ENCODE measurements at regions of chr14 and their contacts with region 1.

Region 1: DNA sequence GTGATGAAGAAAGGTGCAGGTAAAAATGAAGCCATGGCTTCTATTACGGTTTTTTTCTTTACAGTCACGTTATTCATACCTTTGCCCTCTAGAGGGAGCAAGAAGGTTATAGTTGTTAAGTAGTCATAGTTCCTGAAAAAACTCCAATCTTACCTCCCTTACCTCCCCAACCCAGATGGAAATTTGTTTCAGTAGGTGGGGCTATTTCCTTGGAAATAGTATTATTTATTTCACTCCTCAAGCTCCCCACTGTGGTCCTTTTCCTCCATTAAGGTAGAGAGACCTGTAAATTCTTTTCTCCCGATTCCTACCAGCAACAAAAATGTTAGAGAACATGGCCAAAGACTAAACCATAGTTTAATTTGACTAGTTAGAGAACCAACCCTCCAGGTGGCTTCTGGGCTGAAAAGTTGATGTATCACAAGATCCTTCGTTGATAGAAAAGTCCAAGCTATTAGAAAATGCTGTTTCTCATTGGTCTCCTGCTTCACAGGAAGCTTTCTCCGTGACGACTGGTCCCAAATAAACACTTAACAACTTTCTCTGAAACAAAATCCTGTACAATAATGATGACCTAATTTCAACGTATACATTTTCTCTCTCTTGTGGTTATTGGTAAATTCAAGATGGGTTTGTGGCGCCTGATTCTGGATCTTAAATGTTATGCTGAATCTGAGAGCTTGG is 43.5 kb downstream of the TMX1 start:
- H3K4me3 Mint-ChIP-seq: no peak overlapping the region
- H3K27ac Mint-ChIP-seq: no peak overlapping the region
- H3K4me1 Mint-ChIP-seq: no peaks in the 10 kb centered on the region
- H3K27me3 Mint-ChIP-seq: no peaks in the 10 kb centered on the region

Region 2: GRCh38 chr14:51651388-51652167 is 368.0 kb after region 1 on chr14 and contains the start of gene FRMD6:
- intact Hi-C with region 1: loop called (anchors 10 kb)
- H3K4me3 Mint-ChIP-seq: peak within 1 kb of the TSS; percentile 87
- H3K27ac Mint-ChIP-seq: peak within 1 kb of the TSS; percentile 92
- H3K4me1 Mint-ChIP-seq: peaks cover 23% of the 10 kb centered on the region
- H3K27me3 Mint-ChIP-seq: peaks cover 24% of the 10 kb centered on the region

Region 3: GRCh38 chr14:51979088-51979709 is 695.7 kb after region 1 on chr14:
- intact Hi-C with region 1: loop called (anchors 5 kb)
- H3K4me3 Mint-ChIP-seq: no peak overlapping the region
- H3K27ac Mint-ChIP-seq: no peak overlapping the region
- H3K4me1 Mint-ChIP-seq: no peaks in the 10 kb centered on the region
- H3K27me3 Mint-ChIP-seq: peaks cover 4% of the 10 kb centered on the region

Measured in dendritic cell treated with granulocyte-macrophage colony-stimulating factor and Interleukin-4, amounts not matched to agents 40 ng/mL and 50 ng/mL, for 4 days (primary cell).